ENCODE measurements at regions of chr6 and their contacts with region 1.

Region 1: GRCh38 chr6:130885392-130886192 is 58.4 kb downstream of the SMLR1 start:
- DNase-seq: no peak
- H3K4me3 ChIP-seq: no peak overlapping the region
- H3K27ac ChIP-seq: no peak overlapping the region
- H3K4me1 ChIP-seq: no peaks in the 10 kb centered on the region
- H3K27me3 ChIP-seq: no peaks in the 10 kb centered on the region
- CTCF ChIP-seq: peak; percentile 94

Region 2: GRCh38 chr6:130587778-130588520 is 297.6 kb before region 1 on chr6:
- intact Hi-C with region 1: no loop called
- DNase-seq: no peak
- H3K4me3 ChIP-seq: no peak overlapping the region
- H3K27ac ChIP-seq: no peak overlapping the region
- H3K4me1 ChIP-seq: no peaks in the 10 kb centered on the region
- H3K27me3 ChIP-seq: peaks cover 4% of the 10 kb centered on the region
- CTCF ChIP-seq: no peak

Region 3: DNA sequence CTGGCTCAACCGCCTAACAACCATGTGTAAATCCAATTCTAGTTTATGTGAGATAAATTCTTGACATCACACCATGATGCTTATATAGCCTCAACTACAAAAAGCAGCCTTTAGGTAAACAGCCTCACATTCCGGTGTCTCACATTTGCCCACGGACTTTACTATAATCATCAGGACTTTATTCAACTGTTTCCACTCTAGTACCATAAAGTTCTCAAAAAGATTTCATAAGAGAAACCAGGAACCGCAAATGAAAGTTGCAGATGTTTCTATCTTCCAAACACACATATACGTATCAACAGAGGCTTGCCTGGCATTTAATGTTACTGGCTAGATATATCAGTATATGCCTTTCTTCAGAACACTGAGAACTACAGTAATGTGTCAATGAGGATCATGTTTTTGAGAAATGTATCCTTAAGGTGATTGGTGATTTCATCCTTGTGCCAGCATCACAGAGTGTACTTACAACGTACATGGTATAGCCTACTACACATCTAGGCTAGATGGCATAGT is 97.4 kb after region 1 on chr6:
- intact Hi-C with region 1: no loop called
- DNase-seq: no peak
- H3K4me3 ChIP-seq: no peak overlapping the region
- H3K27ac ChIP-seq: no peak overlapping the region
- H3K4me1 ChIP-seq: peaks cover 47% of the 10 kb centered on the region
- H3K27me3 ChIP-seq: no peaks in the 10 kb centered on the region
- CTCF ChIP-seq: no peak

Region 4: DNA sequence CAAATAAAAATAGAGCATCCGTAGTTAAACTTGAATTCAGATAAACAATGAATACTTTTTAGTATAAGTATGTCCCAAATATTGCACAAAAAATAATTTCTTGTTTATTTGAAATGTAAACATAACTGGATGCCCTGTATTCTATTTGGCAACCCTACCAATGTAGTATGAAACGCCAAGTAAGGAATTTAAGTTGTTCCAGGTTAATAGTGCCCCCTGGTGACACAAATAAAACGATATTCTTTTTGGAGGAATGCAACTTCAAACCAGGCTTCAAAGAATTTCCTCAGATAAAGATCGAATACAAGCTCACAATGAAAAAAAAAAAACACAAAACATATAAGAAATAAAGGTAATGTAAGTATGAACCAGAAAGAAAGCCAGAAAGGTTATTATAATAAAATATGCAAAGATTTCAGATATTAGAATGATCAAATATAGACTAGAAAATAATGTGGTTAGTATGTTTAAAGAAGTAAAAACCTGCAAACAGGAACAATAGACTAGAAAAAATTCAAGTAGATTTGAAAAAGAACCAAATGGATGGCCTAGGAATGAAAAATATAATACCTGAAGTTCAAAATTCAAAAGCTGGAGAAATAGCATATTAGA is 231.3 kb after region 1 on chr6:
- intact Hi-C with region 1: loop called (anchors 5 kb)
- DNase-seq: no peak
- H3K4me3 ChIP-seq: no peak overlapping the region
- H3K27ac ChIP-seq: no peak overlapping the region
- H3K4me1 ChIP-seq: no peaks in the 10 kb centered on the region
- H3K27me3 ChIP-seq: no peaks in the 10 kb centered on the region
- CTCF ChIP-seq: peak; percentile 62